Dendritic cell treated with granulocyte-macrophage colony-stimulating factor and Interleukin-4, amounts not matched to agents 40 ng/mL and 50 ng/mL, for 4 days (primary cell): ENCODE measurements at regions of chrX and their contacts with region 1.

Region 1: DNA sequence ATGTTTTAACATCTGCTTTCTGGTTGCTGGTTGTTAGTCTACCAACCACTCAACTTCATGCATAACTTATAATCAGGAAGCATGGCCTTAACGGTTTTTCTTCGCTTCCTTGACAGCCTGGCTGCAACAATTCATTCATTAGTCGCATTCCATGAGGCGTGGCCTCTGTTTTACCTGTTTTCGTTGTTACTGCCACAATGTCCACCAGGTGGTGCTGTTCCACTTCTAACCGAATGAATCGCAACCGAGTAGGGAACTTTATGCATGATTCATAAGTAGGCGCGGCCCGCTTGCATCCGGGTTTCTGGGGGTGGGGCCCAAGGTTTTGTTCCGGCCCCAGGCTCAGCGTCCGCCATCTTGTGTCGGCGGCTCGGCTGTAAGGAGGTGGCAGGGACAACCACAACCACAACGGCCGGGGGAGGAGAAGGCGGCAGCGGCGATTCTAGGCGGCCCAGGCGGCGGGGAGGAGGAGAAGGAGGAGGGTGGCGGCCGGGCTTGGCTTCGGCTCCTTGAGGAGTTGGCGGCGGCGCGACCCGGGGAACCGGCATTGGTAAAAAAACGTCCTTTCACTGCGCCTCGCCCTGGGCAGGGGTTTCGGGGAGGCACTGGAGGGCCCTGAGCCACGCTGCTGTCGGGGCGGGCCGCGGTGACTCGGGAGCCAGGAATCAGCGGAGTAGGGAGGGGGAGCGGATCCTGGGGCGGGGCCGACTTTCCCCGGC is at the start of gene UBA1:
- H3K4me3 Mint-ChIP-seq: peak within 1 kb of the TSS; percentile 89
- H3K27ac Mint-ChIP-seq: peak within 1 kb of the TSS; percentile 95
- H3K4me1 Mint-ChIP-seq: peaks cover 45% of the 10 kb centered on the region
- H3K27me3 Mint-ChIP-seq: no peaks in the 10 kb centered on the region

Region 2: GRCh38 chrX:47311932-47312774 is 118.5 kb after region 1 on chrX:
- intact Hi-C with region 1: loop called (anchors 10 kb)
- H3K4me3 Mint-ChIP-seq: no peak overlapping the region
- H3K27ac Mint-ChIP-seq: no peak overlapping the region
- H3K4me1 Mint-ChIP-seq: no peaks in the 10 kb centered on the region
- H3K27me3 Mint-ChIP-seq: no peaks in the 10 kb centered on the region

Region 3: DNA sequence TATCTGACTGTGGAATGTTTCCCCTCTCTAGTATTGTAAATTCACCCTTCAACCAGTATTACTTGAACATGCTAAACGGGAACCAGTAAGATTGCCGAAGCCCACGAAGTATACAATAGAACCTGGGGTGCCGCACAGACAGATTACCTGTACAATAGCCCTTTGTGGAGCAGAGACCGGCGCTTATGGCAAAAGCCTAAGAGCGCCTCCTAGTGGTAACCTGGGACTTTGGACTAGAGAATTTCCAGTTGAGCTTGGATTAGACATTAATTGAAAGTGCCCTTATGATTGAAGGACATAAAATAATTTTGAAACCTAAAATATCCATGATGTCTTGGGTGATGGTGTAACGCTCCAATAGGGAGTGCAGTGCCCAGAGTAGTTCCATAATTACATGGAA is 190.9 kb after region 1 on chrX:
- intact Hi-C with region 1: loop called (anchors 1 kb)
- H3K4me3 Mint-ChIP-seq: no peak overlapping the region
- H3K27ac Mint-ChIP-seq: no peak overlapping the region
- H3K4me1 Mint-ChIP-seq: peaks cover 9% of the 10 kb centered on the region
- H3K27me3 Mint-ChIP-seq: peaks cover 3% of the 10 kb centered on the region

Region 4: GRCh38 chrX:47523297-47523696 is 329.7 kb after region 1 on chrX:
- intact Hi-C with region 1: loop called (anchors 1 kb)
- H3K4me3 Mint-ChIP-seq: peak overlapping the region; percentile 65
- H3K27ac Mint-ChIP-seq: no peak overlapping the region
- H3K4me1 Mint-ChIP-seq: peaks cover 3% of the 10 kb centered on the region
- H3K27me3 Mint-ChIP-seq: peaks cover 10% of the 10 kb centered on the region

Region 5: GRCh38 chrX:47958761-47959342 is 765.2 kb after region 1 on chrX:
- intact Hi-C with region 1: no loop called
- H3K4me3 Mint-ChIP-seq: no peak overlapping the region
- H3K27ac Mint-ChIP-seq: no peak overlapping the region
- H3K4me1 Mint-ChIP-seq: peaks cover 7% of the 10 kb centered on the region
- H3K27me3 Mint-ChIP-seq: no peaks in the 10 kb centered on the region